ENCODE measurements at regions of chr22 and their contacts with region 1.

Region 1: GRCh38 chr22:44396727-44397722 is 84.3 kb upstream of the SHISAL1 start:
- DNase-seq: no peak
- ATAC-seq: no peak
- H3K4me3 Mint-ChIP-seq: no peak overlapping the region
- H3K27ac Mint-ChIP-seq: no peak overlapping the region
- H3K4me1 Mint-ChIP-seq: 0 out of 2 replicates have a peak, but pooled peaks cover 2% of the 10 kb centered on the region
- H3K27me3 Mint-ChIP-seq: no peaks in the 10 kb centered on the region
- CTCF ChIP-seq: no peak

Region 2: GRCh38 chr22:44256556-44257485 is 140.2 kb before region 1 on chr22:
- CTCF ChIA-PET with region 1: no interaction called
- POLR2A ChIA-PET with region 1: interaction called, 10 read pairs
- DNase-seq: peak; percentile 6
- ATAC-seq: peak; percentile 60
- H3K4me3 Mint-ChIP-seq: no peak overlapping the region
- H3K27ac Mint-ChIP-seq: no peak overlapping the region
- H3K4me1 Mint-ChIP-seq: peaks cover 14% of the 10 kb centered on the region
- H3K27me3 Mint-ChIP-seq: no peaks in the 10 kb centered on the region
- CTCF ChIP-seq: no peak